Sigmoid colon (tissue), 7 donors: ENCODE measurements at regions of chr11 and their contacts with region 1.

Region 1: GRCh38 chr11:8911029-8911826 is at the start of gene AKIP1:
- DNase-seq: peak; percentile 98
- H3K4me3 ChIP-seq: peak within 1 kb of the TSS; percentile 62 to 69 (median 63)
- H3K27ac ChIP-seq: peak within 1 kb of the TSS; percentile 89 to 97 (median 92)
- H3K4me1 ChIP-seq: peaks cover 0 to 44% (median 35%) of the 10 kb centered on the region in 4 donors
- H3K27me3 ChIP-seq: no peaks in the 10 kb centered on the region
- CTCF ChIP-seq: no peak
- EP300 ChIP-seq: no peak
- POLR2A ChIP-seq: peak; percentile 50 to 80
- total RNA-seq, gene AKIP1: 21.6 to 33.2 (median 26.5) TPM

Region 2: DNA sequence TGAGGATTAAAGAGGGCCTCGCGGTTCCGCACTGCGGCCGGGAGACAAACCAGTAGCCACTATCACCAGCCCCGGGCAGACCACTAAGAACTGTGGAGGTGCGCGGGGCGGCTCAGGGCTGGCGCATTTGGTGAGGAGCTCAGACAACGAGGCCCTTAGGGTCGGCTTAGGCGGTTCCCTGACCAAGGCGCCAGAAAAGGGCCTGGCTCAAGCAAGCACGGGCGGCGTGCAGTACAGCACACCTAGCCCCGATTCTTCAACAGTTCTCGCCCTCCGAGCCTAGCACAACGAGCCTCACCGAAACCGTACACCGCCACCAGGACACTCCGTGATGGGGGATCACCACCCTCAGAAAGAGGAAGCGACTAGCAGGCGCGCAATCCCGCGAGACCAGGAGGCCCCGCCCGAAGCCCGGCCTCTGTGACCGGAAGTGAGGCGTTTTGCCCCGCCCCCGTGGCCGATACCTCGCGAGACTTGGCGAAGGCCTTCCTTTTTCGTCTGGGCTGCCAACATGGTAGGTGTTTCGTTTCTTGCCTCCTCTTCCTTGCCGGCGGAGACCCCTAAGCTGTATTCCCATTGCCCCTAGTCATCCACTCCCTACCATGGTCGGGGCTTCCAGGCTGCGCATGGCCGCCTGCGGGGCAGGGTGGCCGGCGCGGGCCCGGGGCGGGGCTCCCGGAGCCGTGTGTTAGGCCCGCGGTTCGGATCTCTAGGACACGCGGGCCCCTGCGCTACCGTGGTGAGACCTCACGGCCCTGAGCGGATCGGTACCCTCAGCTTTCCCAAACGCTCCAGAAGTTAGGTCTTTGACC is 228.7 kb before region 1 on chr11 and contains the starts of genes RPL27A and TRIM66:
- intact Hi-C with region 1: loop called (anchors 5 kb)
- DNase-seq: peak; percentile 99
- H3K4me3 ChIP-seq: peak within 1 kb of the TSS; percentile 74 to 95 (median 92)
- H3K27ac ChIP-seq: peak within 1 kb of the TSS; percentile 93 to 99 (median 96)
- H3K4me1 ChIP-seq: peaks cover 0 to 29% (median 22%) of the 10 kb centered on the region in 4 donors
- H3K27me3 ChIP-seq: no peaks in the 10 kb centered on the region
- CTCF ChIP-seq: peak in 2 of 4 experiments; percentile 22 to 25
- EP300 ChIP-seq: peak in 2 of 4 donors; percentile 3 to 23
- POLR2A ChIP-seq: peak; percentile 99 to 100
- total RNA-seq, gene RPL27A: 1,472 to 2,262 (median 1,872) TPM
- total RNA-seq, gene TRIM66: 1.8 to 24.4 (median 10.2) TPM

Region 3: DNA sequence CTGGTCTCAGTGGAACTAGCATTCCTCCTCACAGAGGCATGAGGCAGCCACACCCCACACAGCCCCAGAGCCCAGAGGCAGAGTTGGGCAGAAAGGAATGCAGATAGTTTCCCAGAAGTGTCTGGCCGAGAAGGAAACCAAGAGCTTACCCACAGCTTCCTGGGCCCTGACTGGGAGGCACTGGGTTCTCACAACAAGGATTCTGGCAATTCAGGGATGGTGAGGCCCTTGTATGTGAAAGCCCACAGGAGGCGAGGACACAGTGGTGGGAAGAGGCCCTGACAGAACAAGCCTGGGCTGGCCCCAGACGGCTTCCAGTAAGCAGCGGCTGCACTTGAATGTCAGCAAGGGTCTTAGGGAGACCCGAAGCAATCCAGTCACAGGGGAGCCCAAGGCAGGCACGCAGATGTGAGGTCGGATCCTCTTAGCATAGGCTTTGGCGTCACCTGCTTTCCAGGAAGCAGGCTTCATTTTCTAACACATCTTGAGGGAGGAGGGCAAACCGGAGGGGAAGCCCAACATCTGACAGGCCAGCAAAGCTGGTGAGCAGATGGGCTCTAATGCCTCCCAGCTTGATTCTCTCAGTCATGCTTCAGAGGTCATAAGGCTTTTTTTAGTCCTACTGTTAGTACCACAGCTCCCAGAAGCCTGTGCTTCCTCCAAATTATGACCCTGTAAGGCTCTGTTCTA is 78.5 kb before region 1 on chr11:
- intact Hi-C with region 1: loop called (anchors 5 kb)
- DNase-seq: peak; percentile 64
- H3K4me3 ChIP-seq: no peak overlapping the region
- H3K27ac ChIP-seq: peak overlapping the region; percentile 70 to 87 (median 82)
- H3K4me1 ChIP-seq: peaks cover 0 to 27% (median 17%) of the 10 kb centered on the region in 4 donors
- H3K27me3 ChIP-seq: no peaks in the 10 kb centered on the region
- CTCF ChIP-seq: no peak
- EP300 ChIP-seq: peak in 1 of 4 donors; percentile 46
- POLR2A ChIP-seq: no peak

Region 4: DNA sequence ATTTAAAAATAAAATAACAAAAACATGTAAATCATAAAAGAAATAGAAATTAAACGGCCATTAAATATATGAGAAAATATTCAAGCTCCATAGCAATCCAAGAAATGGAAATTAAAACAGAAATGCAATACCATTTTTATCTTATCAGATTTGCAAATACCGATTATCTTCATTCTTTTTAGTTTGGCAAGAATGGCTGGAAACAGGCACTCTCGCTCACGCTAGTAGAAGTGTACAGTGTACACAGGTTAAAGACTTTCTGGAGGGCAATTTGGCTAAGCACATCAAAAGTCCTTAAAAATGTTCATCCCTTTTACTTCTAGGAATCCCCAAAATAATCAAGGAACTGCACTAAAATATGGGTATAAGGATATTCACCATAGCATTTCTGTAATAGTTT is 59.9 kb before region 1 on chr11:
- intact Hi-C with region 1: no loop called
- DNase-seq: no peak
- H3K4me3 ChIP-seq: no peak overlapping the region
- H3K27ac ChIP-seq: no peak overlapping the region
- H3K4me1 ChIP-seq: peaks cover 0 to 10% (median 0%) of the 10 kb centered on the region in 4 donors
- H3K27me3 ChIP-seq: no peaks in the 10 kb centered on the region
- CTCF ChIP-seq: no peak
- EP300 ChIP-seq: no peak
- POLR2A ChIP-seq: no peak

Region 5: GRCh38 chr11:8870411-8871170 is 40.6 kb before region 1 on chr11:
- intact Hi-C with region 1: loop called (anchors 2 kb)
- DNase-seq: peak; percentile 79
- H3K4me3 ChIP-seq: peak overlapping the region; percentile 81 to 91 (median 83)
- H3K27ac ChIP-seq: peak overlapping the region; percentile 88 to 94 (median 92)
- H3K4me1 ChIP-seq: peaks cover 0 to 61% (median 31%) of the 10 kb centered on the region in 4 donors
- H3K27me3 ChIP-seq: no peaks in the 10 kb centered on the region
- CTCF ChIP-seq: no peak
- EP300 ChIP-seq: no peak
- POLR2A ChIP-seq: no peak

Region 6: DNA sequence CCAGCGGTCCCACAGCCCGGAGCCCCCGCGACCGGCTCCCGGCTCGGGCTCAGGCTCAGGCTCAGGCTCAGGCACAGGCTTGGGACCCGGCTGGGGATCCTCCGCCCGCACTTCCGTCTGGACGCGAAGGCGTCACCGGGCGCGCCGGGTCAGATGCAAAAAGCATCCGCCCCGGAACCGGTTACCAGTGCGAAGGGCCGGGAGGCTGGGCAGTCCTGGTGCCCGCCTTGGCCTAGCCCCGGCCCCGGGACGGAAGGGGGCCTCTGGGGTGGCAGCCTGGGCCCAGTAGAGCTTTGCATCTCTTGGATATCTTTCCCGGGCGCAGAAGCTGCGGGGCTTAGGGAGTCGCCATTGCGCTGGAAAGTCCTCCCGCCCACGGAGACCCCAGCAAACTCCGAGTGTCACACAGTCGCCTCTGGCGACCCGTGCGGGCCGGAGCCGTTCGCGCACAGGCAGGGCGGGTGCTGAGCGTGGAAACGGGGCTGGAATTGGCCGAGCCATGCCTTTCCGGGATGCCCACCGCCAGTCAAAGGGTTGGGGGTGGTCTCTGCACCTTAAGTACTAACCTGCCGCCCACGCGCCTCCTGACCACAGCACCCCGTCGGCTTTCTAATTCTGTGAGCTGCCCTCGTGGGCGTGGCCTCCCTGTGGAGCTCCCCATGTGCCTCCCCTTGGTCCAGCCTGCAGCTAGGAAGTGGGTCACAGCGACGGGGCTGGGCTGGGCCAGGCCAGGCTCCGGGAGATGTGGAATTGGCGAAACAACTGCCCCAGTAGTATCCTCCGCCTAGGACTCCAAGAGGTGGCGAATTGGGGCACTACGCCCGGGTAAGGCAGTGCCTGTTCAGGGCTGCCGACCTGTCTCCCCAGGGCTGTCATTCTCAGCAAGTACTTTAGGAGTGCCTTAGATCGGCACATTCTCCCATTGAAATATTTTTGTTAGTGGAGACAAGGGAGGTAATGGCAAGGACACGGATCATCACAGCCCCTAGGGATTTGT is 53.4 kb after region 1 on chr11 and contains the start of gene TMEM9B:
- intact Hi-C with region 1: loop called (anchors 2 kb)
- DNase-seq: peak; percentile 94
- H3K4me3 ChIP-seq: peak within 1 kb of the TSS; percentile 65 to 91 (median 78)
- H3K27ac ChIP-seq: peak within 1 kb of the TSS; percentile 92 to 98 (median 96)
- H3K4me1 ChIP-seq: peaks cover 0 to 37% (median 32%) of the 10 kb centered on the region in 4 donors
- H3K27me3 ChIP-seq: no peaks in the 10 kb centered on the region
- CTCF ChIP-seq: no peak
- EP300 ChIP-seq: peak in 2 of 4 donors; percentile 24 to 49
- POLR2A ChIP-seq: peak; percentile 94 to 95
- total RNA-seq, gene TMEM9B: 13.3 to 24.3 (median 20.1) TPM

Region 7: GRCh38 chr11:9078113-9079086 is 167.2 kb after region 1 on chr11:
- intact Hi-C with region 1: no loop called
- DNase-seq: no peak
- H3K4me3 ChIP-seq: no peak overlapping the region
- H3K27ac ChIP-seq: peak overlapping the region in 2 of 4 donors; percentile 49 to 74
- H3K4me1 ChIP-seq: peaks cover 0 to 37% (median 27%) of the 10 kb centered on the region in 4 donors
- H3K27me3 ChIP-seq: no peaks in the 10 kb centered on the region
- CTCF ChIP-seq: no peak
- EP300 ChIP-seq: no peak
- POLR2A ChIP-seq: no peak

Region 8: GRCh38 chr11:9137293-9138132 is 226.3 kb after region 1 on chr11:
- intact Hi-C with region 1: loop called (anchors 2 kb)
- DNase-seq: peak; percentile 89
- H3K4me3 ChIP-seq: no peak overlapping the region
- H3K27ac ChIP-seq: peak overlapping the region in 2 of 4 donors; percentile 26 to 35
- H3K4me1 ChIP-seq: peaks cover 0 to 6% (median 1%) of the 10 kb centered on the region in 4 donors
- H3K27me3 ChIP-seq: no peaks in the 10 kb centered on the region
- CTCF ChIP-seq: peak; percentile 85 to 98 (median 94)
- EP300 ChIP-seq: no peak
- POLR2A ChIP-seq: no peak

Region 9: DNA sequence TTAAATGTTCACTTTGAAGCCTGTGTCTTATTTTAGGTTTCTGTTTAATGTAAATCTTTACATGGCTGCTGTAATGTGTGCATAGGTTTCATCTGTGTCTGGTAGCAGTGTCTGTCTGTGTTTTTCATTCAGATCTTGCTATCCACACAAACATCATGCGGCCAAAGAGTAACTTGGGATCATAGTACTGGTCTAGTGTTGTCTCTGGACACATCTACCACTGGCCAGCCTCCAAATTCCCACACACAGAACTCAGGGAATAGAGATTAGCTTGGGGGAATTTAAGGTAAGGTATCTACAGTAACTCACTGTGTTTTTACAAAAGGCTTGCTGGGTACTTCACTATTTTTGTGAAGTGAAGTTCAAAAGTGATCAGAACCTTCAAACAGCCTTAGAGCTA is 517.5 kb after region 1 on chr11:
- intact Hi-C with region 1: no loop called
- DNase-seq: no peak
- H3K4me3 ChIP-seq: no peak overlapping the region
- H3K27ac ChIP-seq: no peak overlapping the region
- H3K4me1 ChIP-seq: no peaks in the 10 kb centered on the region
- H3K27me3 ChIP-seq: no peaks in the 10 kb centered on the region
- CTCF ChIP-seq: no peak
- EP300 ChIP-seq: no peak
- POLR2A ChIP-seq: no peak